ENCODE measurements at regions of chrX and their contacts with region 1.

Region 1: GRCh38 chrX:64894454-64895038 is 81.7 kb downstream of the ZC4H2 start:
- DNase-seq: peak; percentile 57
- ATAC-seq: peak; percentile 72
- H3K4me3 Mint-ChIP-seq: no peak overlapping the region
- H3K27ac Mint-ChIP-seq: no peak overlapping the region
- H3K4me1 Mint-ChIP-seq: no peaks in the 10 kb centered on the region
- H3K27me3 Mint-ChIP-seq: no peaks in the 10 kb centered on the region
- CTCF ChIP-seq: peak; percentile 64

Region 2: DNA sequence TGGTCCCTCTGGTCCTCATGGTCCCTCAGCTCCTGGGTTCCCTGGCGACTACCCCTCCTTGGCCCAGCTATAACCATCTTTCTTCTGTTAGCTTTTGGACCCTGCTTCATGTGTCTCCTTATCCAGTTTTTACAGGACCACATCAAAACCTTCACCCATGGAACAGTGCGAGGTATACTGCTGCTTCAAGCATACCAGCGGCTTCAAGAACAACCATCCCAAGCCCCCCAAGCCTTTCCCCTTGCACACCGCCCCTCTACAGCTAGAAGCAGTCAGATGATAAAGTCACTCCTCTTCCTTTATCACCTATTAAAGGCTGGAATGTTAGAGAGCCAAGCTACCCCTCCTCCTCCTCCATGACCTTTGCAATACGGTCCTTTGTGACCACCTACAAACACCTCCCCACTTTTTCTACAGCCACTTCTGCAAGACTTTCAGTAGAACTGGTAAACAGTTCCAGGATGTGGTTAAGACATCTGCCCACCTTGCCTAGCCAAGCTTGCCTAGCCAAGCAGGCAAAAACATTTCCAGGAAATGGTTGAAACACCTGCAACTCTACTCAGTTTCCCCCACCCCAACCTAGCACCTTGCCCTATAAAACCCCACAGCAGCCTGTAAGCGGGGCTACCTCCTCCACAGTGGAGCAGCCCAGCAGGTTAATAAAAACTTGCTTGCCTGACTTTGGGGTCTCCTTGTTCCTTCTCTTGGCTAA is 44.0 kb before region 1 on chrX:
- CTCF ChIA-PET with region 1: no interaction called
- POLR2A ChIA-PET with region 1: no interaction called
- intact Hi-C with region 1: no loop called
- DNase-seq: peak; percentile 54
- ATAC-seq: peak; percentile 84
- H3K4me3 Mint-ChIP-seq: peak overlapping the region; percentile 9
- H3K27ac Mint-ChIP-seq: no peak overlapping the region
- H3K4me1 Mint-ChIP-seq: peaks cover 18% of the 10 kb centered on the region
- H3K27me3 Mint-ChIP-seq: no peaks in the 10 kb centered on the region
- CTCF ChIP-seq: no peak

Region 3: DNA sequence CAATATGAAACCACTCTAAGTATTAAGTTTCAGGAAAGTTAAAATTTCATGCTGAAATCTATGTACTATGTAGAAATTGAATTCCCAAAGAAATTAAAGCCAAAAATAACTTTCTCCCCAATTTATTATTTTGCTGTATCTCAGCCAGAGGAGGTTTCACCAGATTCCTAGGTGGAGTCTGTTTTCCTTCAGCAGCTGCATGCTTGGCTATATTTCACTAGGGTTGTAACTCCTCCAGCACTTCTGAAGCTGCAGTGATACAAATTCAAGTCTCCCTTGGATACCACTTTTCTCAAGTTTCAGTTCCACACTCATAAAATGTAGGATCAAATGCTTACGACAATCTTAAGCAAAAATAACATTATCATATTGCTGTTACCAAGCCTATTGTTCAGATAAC is 122.9 kb after region 1 on chrX:
- CTCF ChIA-PET with region 1: no interaction called
- POLR2A ChIA-PET with region 1: no interaction called
- intact Hi-C with region 1: no loop called
- DNase-seq: no peak
- ATAC-seq: no peak
- H3K4me3 Mint-ChIP-seq: no peak overlapping the region
- H3K27ac Mint-ChIP-seq: no peak overlapping the region
- H3K4me1 Mint-ChIP-seq: no peaks in the 10 kb centered on the region
- H3K27me3 Mint-ChIP-seq: no peaks in the 10 kb centered on the region
- CTCF ChIP-seq: no peak

Region 4: DNA sequence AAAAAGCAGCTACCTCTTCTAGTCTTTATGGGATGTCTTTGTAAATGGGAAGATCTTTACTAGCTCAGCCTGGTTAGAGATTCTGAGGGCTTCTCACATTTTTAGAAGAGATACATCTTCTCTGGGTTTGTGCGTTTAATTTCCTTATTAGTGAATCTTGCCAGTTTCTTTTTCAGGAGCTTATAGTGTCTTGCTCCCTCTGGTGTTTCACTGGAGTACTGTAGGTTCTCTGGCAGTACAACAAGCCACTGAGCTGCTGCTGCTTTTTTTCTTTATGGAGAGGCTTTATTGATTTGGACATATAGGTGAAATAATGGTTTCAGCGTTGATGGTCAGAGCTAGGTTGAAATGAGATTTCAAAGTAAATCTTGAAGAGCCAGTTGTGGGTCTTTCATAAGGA is 557.1 kb after region 1 on chrX:
- CTCF ChIA-PET with region 1: no interaction called
- POLR2A ChIA-PET with region 1: no interaction called
- intact Hi-C with region 1: loop called (anchors 10 kb)
- DNase-seq: peak; percentile 13
- ATAC-seq: peak; percentile 61
- H3K4me3 Mint-ChIP-seq: no peak overlapping the region
- H3K27ac Mint-ChIP-seq: no peak overlapping the region
- H3K4me1 Mint-ChIP-seq: no peaks in the 10 kb centered on the region
- H3K27me3 Mint-ChIP-seq: no peaks in the 10 kb centered on the region
- CTCF ChIP-seq: peak; percentile 46

Measured in activated CD8-positive, alpha-beta T cell treated with anti-CD3 and anti-CD28 coated beads for 36 hours (primary cell).